Caco-2 (cell line): ENCODE measurements at regions of chr16 and their contacts with region 1.

Region 1: GRCh38 chr16:67339453-67339852 is 12.8 kb downstream of the LRRC36 start:
- DNase-seq: peak in 1 of 2 experiments; percentile 38
- H3K4me3 ChIP-seq: no peak overlapping the region
- H3K4me3 Mint-ChIP-seq: no peak overlapping the region
- H3K27ac Mint-ChIP-seq: no peak overlapping the region
- H3K4me1 ChIP-seq: no peaks in the 10 kb centered on the region
- H3K4me1 Mint-ChIP-seq: no peaks in the 10 kb centered on the region
- H3K27me3 ChIP-seq: no peaks in the 10 kb centered on the region
- H3K27me3 Mint-ChIP-seq: no peaks in the 10 kb centered on the region
- CTCF ChIP-seq: peak; percentile 30 to 58

Region 2: DNA sequence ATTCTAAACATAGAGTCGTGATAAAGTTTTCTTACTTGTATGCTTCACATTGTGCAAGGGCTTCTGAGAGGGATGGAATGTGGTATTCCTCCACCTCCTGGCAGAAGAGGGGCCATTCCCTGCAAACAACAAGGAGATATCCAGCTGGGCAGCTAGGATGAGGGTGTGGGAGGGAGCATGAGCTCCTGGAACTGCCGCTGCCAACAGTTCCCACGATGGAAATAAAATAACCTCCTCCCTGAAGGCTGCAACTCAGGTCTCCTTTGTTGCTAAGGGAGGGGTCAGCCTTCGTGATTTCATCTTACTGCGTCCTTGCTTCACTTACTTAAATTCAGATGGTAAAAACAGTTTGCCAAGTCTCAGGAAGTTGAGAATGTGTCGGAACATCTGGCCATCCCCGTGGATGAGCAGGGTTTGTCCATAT is 44.5 kb before region 1 on chr16:
- CTCF ChIA-PET with region 1: interaction called, 3 read pairs
- POLR2A ChIA-PET with region 1: interaction called, 4 read pairs
- intact Hi-C with region 1: loop called (anchors 5 kb)
- DNase-seq: no peak
- H3K4me3 ChIP-seq: no peak overlapping the region
- H3K4me3 Mint-ChIP-seq: no peak overlapping the region
- H3K27ac Mint-ChIP-seq: no peak overlapping the region
- H3K4me1 ChIP-seq: peaks cover 15% of the 10 kb centered on the region
- H3K4me1 Mint-ChIP-seq: peaks cover 6% of the 10 kb centered on the region
- H3K27me3 ChIP-seq: no peaks in the 10 kb centered on the region
- H3K27me3 Mint-ChIP-seq: no peaks in the 10 kb centered on the region
- CTCF ChIP-seq: no peak

Region 3: DNA sequence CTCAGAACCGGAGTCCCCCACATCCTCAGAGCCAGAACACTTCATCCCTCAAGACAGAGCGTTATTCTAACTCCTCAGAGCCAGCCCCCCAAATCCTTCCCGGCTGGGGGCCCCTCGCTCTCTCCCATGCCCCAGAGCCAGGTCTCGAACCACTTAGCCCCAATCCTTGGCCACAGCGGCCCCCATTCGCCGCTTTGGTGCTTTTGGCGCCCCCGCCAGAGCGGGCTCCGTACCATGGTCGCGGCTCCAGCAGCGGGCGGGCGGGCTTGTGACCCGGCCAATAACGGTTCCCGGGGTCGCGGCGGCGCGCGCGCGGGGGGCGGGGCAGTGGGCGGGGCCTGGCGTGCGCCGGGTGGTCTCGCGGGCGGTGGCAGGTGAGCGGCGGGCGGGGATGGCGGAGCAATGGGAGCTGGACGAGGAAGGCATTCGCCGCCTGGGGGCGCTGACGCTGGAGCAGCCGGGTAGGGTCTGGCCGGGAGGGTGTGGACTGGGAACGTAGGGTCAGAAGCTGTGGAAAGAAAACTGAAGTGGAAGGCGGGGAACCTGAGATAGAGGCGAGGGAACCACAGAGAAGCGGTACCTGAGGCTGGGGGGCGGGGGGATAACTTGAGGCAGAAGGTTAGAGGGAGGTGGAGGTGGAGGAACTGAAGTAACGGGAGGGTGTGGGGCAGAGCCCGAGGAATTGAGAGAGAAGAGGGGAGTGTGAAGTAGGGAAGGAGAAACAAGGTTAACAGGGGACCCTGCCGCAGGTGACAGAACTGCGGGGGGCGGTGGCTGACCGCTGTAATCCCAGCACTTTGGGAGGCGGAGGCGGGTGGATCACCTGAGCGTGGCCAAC is 12.8 kb before region 1 on chr16 and contains the starts of genes KCTD19 and LRRC36:
- CTCF ChIA-PET with region 1: no interaction called
- POLR2A ChIA-PET with region 1: no interaction called
- intact Hi-C with region 1: no loop called
- DNase-seq: peak; percentile 62 to 72
- H3K4me3 ChIP-seq: peak within 1 kb of the TSS; percentile 35
- H3K4me3 Mint-ChIP-seq: peak within 1 kb of the TSS; percentile 60
- H3K27ac Mint-ChIP-seq: no peak within 1 kb of the TSS
- H3K4me1 ChIP-seq: peaks cover 22% of the 10 kb centered on the region
- H3K4me1 Mint-ChIP-seq: peaks cover 13% of the 10 kb centered on the region
- H3K27me3 ChIP-seq: no peaks in the 10 kb centered on the region
- H3K27me3 Mint-ChIP-seq: peaks cover 5% of the 10 kb centered on the region
- CTCF ChIP-seq: peak in 1 of 2 experiments; percentile 27
- total RNA-seq, gene KCTD19: not detected in 2 replicates
- total RNA-seq, gene LRRC36: 0.79 TPM in 1 of 2 replicates, not detected in the other

Region 4: GRCh38 chr16:67480833-67481560 is 141.5 kb after region 1 on chr16 and contains the start of gene ATP6V0D1:
- CTCF ChIA-PET with region 1: no interaction called
- POLR2A ChIA-PET with region 1: no interaction called
- intact Hi-C with region 1: no loop called
- DNase-seq: peak; percentile 98 to 100
- H3K4me3 ChIP-seq: peak within 1 kb of the TSS; percentile 94
- H3K4me3 Mint-ChIP-seq: peak within 1 kb of the TSS; percentile 98
- H3K27ac Mint-ChIP-seq: peak within 1 kb of the TSS; percentile 94
- H3K4me1 ChIP-seq: peaks cover 15% of the 10 kb centered on the region
- H3K4me1 Mint-ChIP-seq: peaks cover 19% of the 10 kb centered on the region
- H3K27me3 ChIP-seq: no peaks in the 10 kb centered on the region
- H3K27me3 Mint-ChIP-seq: no peaks in the 10 kb centered on the region
- CTCF ChIP-seq: peak; percentile 89 to 96
- total RNA-seq, gene ATP6V0D1: 107 and 110 TPM in 2 replicates